ENCODE measurements at regions of chr3 and their contacts with region 1.

Region 1: GRCh38 chr3:124905849-124906248 is 18.7 kb upstream of the ITGB5 start:
- DNase-seq: no peak
- ATAC-seq: no peak
- H3K4me3 ChIP-seq: no peak overlapping the region
- H3K27ac ChIP-seq: no peak overlapping the region
- H3K4me1 ChIP-seq: peaks cover 0 to 4% of the 10 kb centered on the region in 2 donors
- H3K27me3 ChIP-seq: no peaks in the 10 kb centered on the region
- CTCF ChIP-seq: no peak

Region 2: DNA sequence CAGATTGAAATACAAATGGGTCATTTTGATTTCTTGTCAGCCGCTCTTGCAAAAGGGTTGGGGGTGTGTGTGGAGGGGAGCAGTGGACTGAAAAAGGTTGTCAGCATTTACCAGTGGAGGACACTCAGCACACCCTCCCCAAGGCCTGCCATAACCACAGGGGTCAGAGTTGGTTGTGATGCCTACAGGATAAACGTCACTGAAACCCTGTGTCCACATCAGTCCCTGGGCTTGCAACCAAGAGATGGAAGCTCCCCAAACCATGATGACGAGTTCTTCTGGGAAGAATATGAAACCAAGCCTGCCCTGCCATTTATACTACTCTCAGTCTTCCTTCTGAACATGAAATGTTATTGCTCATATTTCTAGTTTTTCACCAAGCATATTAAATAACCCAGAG is 229.6 kb before region 1 on chr3:
- intact Hi-C with region 1: no loop called
- DNase-seq: no peak
- ATAC-seq: no peak
- H3K4me3 ChIP-seq: no peak overlapping the region
- H3K27ac ChIP-seq: no peak overlapping the region
- H3K4me1 ChIP-seq: no peaks in the 10 kb centered on the region
- H3K27me3 ChIP-seq: no peaks in the 10 kb centered on the region
- CTCF ChIP-seq: no peak

Region 3: DNA sequence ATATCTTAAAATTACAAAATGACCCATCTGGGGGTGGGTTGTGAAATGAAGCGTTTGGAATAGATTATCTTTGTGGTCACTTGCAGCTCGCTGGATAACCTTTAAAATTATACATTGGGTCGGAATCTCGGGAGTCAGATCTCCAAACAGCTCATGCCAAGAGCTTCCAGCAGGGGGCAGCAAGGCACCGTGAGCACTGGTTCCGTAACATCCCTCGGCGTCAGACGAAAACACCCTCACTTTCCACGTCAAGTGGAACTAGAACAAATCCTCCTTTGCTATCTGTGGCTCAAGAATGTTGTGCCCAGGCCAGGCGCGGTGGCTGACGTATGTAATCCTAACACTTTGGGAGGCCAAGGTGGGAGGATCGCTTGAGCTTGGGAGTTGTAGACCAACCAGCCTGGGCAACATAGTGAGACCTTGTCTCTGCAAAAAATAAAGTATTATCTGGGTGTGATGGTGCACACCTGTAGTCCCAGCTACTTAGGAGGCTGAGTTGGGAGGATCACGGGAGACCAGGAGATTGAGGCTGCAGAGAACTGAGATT is 144.5 kb before region 1 on chr3:
- intact Hi-C with region 1: loop called (anchors 5 to 10 kb)
- DNase-seq: peak; percentile 75 to 88 (median 80)
- ATAC-seq: peak; percentile 97
- H3K4me3 ChIP-seq: no peak overlapping the region
- H3K27ac ChIP-seq: no peak overlapping the region
- H3K4me1 ChIP-seq: peaks cover 0 to 14% of the 10 kb centered on the region in 2 donors
- H3K27me3 ChIP-seq: no peaks in the 10 kb centered on the region
- CTCF ChIP-seq: peak; percentile 90 to 94